Activated T-helper 2 cell treated with anti-CD3 and anti-CD28 coated beads, Interferon-gamma antibody, Interleukin-2, Interleukin-4, amounts not matched to agents 10 μg/mL and 5 μg/mL and 100 μg/mL, durations not matched to agents 14 hours and 24 hours and 36 hours (primary cell): ENCODE measurements at regions of chr1 and their contacts with region 1.

Region 1: GRCh38 chr1:205335643-205336091 is 14.1 kb upstream of the NUAK2 start:
- DNase-seq: peak; percentile 57
- H3K4me3 Mint-ChIP-seq: no peak overlapping the region
- H3K27ac Mint-ChIP-seq: no peak overlapping the region
- H3K4me1 Mint-ChIP-seq: no peaks in the 10 kb centered on the region
- H3K27me3 Mint-ChIP-seq: peaks cover 35% of the 10 kb centered on the region

Region 2: GRCh38 chr1:205313563-205314308 is 21.9 kb before region 1 on chr1:
- intact Hi-C with region 1: no loop called
- DNase-seq: no peak
- H3K4me3 Mint-ChIP-seq: peak overlapping the region; percentile 61
- H3K27ac Mint-ChIP-seq: peak overlapping the region; percentile 76
- H3K4me1 Mint-ChIP-seq: peaks cover 48% of the 10 kb centered on the region
- H3K27me3 Mint-ChIP-seq: peaks cover 14% of the 10 kb centered on the region

Region 3: GRCh38 chr1:205458777-205459566 is 123.3 kb after region 1 on chr1:
- intact Hi-C with region 1: loop called (anchors 10 kb)
- DNase-seq: no peak
- H3K4me3 Mint-ChIP-seq: no peak overlapping the region
- H3K27ac Mint-ChIP-seq: no peak overlapping the region
- H3K4me1 Mint-ChIP-seq: peaks cover 3% of the 10 kb centered on the region
- H3K27me3 Mint-ChIP-seq: peaks cover 52% of the 10 kb centered on the region